Panc1 (cell line): ENCODE measurements at regions of chr9 and their contacts with region 1.

Region 1: DNA sequence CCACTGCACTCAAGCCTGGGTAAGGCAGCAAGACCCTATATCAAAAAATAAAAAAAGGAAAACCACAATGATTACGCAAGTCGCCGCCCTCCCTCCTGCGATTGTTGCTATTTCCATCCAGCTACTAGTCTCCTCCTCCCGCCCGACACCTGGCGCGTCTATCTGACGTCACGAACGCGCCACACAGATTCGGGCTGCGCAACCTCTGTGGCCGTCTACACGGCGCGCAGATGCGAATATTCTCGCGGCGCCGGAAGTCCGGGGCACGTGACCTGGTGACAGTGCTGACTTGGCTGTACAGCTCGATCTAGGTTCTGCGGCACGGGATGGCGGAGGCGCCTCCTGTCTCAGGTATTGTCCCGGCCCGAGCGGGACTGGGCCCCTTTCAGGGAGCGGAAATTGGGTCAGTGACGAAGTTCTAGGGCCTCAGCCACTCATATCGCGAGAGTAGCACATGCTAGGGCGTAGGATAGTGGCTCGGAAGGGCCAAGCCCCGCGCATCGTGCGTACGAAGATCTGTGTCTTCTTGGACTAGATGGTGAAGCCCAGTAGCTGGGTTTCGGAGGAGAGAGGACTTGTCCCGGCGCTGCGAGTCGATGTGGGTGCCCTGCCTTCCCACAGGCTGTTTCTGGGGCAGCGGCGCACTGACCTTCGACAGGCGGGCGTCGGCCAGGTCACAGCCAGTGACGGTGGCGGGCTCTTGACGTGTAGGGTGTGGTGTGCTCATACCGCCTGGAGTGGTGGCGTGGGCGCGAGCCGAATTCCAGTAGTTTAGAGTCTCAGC is at the start of gene NFX1:
- DNase-seq: peak; percentile 93
- ATAC-seq: peak; percentile 97
- H3K4me3 ChIP-seq: peak within 1 kb of the TSS; percentile 60 to 91
- H3K27ac ChIP-seq: peak within 1 kb of the TSS; percentile 99
- H3K4me1 ChIP-seq: peaks cover 30% of the 10 kb centered on the region
- H3K27me3 ChIP-seq: no peaks in the 10 kb centered on the region
- CTCF ChIP-seq: no peak
- total RNA-seq, gene NFX1: 38.1 TPM

Region 2: DNA sequence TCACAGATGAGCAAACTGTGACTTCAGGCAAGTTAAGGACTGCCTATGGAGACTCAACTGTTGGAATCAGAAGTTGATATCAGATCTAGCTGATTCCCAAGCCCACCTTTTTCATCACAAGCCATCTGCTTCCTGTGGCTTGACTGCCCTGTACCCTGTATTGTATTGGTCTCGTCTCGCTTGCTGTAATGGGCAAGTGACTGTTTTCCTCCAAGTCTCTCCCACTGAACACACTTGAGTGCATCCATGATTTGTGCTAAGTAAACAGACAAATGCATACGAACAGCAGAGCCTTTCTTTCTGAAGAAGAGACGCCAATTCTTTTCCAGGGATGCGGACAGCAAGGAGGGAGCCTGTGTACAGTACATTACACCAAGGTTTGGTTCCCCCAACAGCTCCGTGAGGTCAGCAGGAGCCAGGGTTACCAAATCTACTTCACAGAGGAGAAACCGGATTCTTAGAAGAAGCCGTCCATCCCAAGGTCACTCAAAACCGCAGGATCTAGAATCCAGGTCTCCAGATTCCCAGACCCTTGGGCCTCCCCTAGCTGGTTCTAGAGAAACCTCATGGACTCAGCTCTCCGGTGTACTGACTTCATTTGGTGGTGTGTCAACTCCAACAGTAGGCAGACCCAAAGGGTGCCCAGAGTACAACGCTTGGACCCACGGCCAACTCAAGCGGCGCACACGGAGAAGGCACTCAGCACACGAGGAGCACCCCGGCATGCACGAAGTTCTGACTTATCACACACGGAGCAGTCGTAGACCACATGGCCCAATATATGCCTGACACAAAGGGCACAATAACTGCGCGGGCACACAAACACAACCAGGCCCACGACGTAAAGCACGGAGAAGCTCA is 27.1 kb before region 1 on chr9:
- CTCF ChIA-PET with region 1: no interaction called
- POLR2A ChIA-PET with region 1: interaction called, 14 read pairs
- in situ Hi-C with region 1: no loop called
- intact Hi-C with region 1: no loop called
- DNase-seq: no peak
- ATAC-seq: peak; percentile 7
- H3K4me3 ChIP-seq: peak overlapping the region; percentile 92 to 96
- H3K27ac ChIP-seq: peak overlapping the region; percentile 92
- H3K4me1 ChIP-seq: peaks cover 15% of the 10 kb centered on the region
- H3K27me3 ChIP-seq: no peaks in the 10 kb centered on the region
- CTCF ChIP-seq: no peak

Region 3: GRCh38 chr9:33304362-33304761 is 13.9 kb after region 1 on chr9:
- CTCF ChIA-PET with region 1: interaction called, 3 read pairs
- POLR2A ChIA-PET with region 1: interaction called, 18 read pairs
- in situ Hi-C with region 1: no loop called
- intact Hi-C with region 1: no loop called
- DNase-seq: no peak
- ATAC-seq: no peak
- H3K4me3 ChIP-seq: no peak overlapping the region
- H3K27ac ChIP-seq: no peak overlapping the region
- H3K4me1 ChIP-seq: no peaks in the 10 kb centered on the region
- H3K27me3 ChIP-seq: no peaks in the 10 kb centered on the region
- CTCF ChIP-seq: no peak

Region 4: GRCh38 chr9:33320568-33321261 is 30.3 kb after region 1 on chr9:
- CTCF ChIA-PET with region 1: no interaction called
- POLR2A ChIA-PET with region 1: no interaction called
- in situ Hi-C with region 1: no loop called
- intact Hi-C with region 1: no loop called
- DNase-seq: no peak
- ATAC-seq: no peak
- H3K4me3 ChIP-seq: no peak overlapping the region
- H3K27ac ChIP-seq: no peak overlapping the region
- H3K4me1 ChIP-seq: no peaks in the 10 kb centered on the region
- H3K27me3 ChIP-seq: no peaks in the 10 kb centered on the region
- CTCF ChIP-seq: no peak

Region 5: DNA sequence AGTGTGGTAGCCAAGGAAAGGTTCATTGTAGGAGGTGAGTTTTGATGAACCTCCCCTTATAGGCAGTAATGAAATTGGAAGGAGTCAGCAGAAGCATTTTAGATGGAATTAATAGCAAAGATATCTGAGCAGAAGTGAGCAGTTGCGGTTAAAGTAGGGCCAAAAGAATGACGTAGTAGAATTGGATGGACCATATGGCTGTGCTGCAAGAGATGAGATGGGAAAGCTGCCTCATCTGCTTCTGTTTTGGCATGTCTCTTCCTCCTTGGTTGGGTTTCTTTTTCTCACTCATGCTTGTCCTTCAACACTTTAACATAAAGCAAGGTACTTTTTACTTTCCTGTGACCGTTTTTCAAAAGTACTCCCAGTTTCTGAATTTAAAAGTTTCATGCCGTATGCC is 56.1 kb after region 1 on chr9:
- CTCF ChIA-PET with region 1: interaction called, 11 read pairs
- POLR2A ChIA-PET with region 1: no interaction called
- in situ Hi-C with region 1: no loop called
- intact Hi-C with region 1: no loop called
- DNase-seq: no peak
- ATAC-seq: no peak
- H3K4me3 ChIP-seq: no peak overlapping the region
- H3K27ac ChIP-seq: no peak overlapping the region
- H3K4me1 ChIP-seq: no peaks in the 10 kb centered on the region
- H3K27me3 ChIP-seq: no peaks in the 10 kb centered on the region
- CTCF ChIP-seq: no peak

Region 6: GRCh38 chr9:33415501-33416038 is 125.1 kb after region 1 on chr9:
- CTCF ChIA-PET with region 1: no interaction called
- POLR2A ChIA-PET with region 1: interaction called, 13 read pairs
- in situ Hi-C with region 1: no loop called
- intact Hi-C with region 1: no loop called
- DNase-seq: peak; percentile 67
- ATAC-seq: peak; percentile 88
- H3K4me3 ChIP-seq: no peak overlapping the region
- H3K27ac ChIP-seq: peak overlapping the region; percentile 24; the same call in 1 of the 2 replicates
- H3K4me1 ChIP-seq: peaks cover 27% of the 10 kb centered on the region
- H3K27me3 ChIP-seq: no peaks in the 10 kb centered on the region
- CTCF ChIP-seq: no peak

Region 7: DNA sequence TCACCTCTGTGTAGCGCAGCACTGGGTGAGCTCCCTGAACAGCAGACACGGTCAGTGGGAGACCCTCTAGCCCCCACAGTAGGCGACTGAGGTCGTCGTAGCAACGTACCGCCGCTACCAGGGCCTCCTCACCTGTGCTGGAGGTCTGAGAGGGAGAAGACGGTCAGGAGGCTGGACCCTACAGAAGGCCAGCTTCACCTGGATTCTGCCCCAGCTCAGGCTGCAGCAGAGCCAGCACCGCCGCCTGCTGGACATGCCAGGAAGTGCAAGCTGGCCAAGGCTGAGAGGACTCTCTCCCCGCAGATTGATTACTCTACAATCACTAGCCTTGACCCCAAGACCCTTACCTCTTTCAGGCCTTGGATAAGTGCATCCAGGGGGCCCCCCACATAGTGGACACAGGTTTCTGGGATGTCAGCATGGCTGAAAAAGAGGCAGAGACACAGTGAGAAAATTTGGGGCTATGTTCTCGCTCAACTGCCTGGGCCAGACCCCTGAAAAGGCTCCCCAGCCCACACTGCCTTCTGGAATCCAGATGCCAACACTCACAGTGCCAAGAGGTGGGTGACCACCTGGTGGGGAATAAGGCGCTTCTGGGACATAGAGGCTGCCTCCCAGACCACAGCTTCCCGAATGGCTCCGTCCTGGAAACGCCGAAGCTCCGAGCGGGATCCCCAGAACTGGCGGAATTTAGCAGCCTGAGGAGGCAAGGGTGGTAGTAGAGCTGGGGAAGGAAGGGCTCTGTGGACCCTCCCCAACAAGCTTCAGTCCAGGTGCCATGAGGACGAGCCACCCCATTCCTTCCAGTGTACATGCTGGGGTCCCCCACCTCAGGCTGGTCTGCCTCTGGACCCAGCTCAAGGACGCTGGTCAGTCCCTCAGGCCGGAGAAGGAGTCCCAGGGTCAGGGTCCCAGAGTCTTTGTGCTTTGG is 176.4 kb after region 1 on chr9:
- CTCF ChIA-PET with region 1: interaction called, 20 read pairs
- POLR2A ChIA-PET with region 1: no interaction called
- in situ Hi-C with region 1: no loop called
- intact Hi-C with region 1: no loop called
- DNase-seq: no peak
- ATAC-seq: peak; percentile 81
- H3K4me3 ChIP-seq: no peak overlapping the region
- H3K27ac ChIP-seq: no peak overlapping the region
- H3K4me1 ChIP-seq: 0 out of 2 replicates have a peak, but pooled peaks cover under 1% of the 10 kb centered on the region
- H3K27me3 ChIP-seq: no peaks in the 10 kb centered on the region
- CTCF ChIP-seq: no peak

Region 8: DNA sequence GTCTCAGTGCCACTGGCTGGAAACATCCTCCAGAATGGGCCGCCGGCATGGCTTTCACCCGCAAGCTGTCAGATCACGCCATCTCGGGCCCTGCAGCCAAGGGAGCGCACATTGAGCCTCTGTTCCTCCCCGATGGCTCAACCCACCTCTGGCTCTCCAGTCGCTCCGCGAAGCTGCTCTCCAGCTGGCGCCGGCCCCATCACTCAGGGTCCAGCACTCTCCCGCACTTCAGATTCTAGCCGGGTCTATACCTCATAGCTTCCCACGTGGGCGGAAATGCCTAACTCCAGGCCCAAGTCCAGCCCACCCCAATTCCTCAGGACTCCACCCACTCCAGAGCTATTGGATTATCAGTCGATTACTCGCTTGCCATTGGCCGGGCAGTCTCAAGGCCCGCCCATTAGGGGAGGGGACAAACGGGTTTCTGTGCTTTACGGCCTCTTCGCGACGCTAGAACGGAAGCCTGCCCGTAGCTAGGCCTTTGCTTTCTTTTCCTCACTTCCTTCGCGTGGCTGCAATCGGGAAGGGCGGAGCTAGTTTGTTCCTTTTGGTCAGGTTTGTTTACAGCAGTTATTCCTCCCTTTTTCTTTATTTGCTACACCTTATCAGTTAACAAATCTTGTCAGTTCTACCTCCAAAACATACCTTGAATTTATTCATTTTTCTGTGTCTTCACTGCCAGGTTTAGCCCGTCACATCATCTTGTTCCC is 183.4 kb after region 1 on chr9 and contains the start of gene NOL6:
- CTCF ChIA-PET with region 1: interaction called, 11 read pairs
- POLR2A ChIA-PET with region 1: interaction called, 3 read pairs
- in situ Hi-C with region 1: no loop called
- intact Hi-C with region 1: no loop called
- DNase-seq: peak; percentile 98
- ATAC-seq: peak; percentile 100
- H3K4me3 ChIP-seq: peak within 1 kb of the TSS; percentile 79 to 99
- H3K27ac ChIP-seq: peak within 1 kb of the TSS; percentile 87
- H3K4me1 ChIP-seq: peaks cover 6% of the 10 kb centered on the region
- H3K27me3 ChIP-seq: no peaks in the 10 kb centered on the region
- CTCF ChIP-seq: no peak
- total RNA-seq, gene NOL6: 75.1 TPM